ENCODE measurements at regions of chr12 and their contacts with region 1.

Region 1: DNA sequence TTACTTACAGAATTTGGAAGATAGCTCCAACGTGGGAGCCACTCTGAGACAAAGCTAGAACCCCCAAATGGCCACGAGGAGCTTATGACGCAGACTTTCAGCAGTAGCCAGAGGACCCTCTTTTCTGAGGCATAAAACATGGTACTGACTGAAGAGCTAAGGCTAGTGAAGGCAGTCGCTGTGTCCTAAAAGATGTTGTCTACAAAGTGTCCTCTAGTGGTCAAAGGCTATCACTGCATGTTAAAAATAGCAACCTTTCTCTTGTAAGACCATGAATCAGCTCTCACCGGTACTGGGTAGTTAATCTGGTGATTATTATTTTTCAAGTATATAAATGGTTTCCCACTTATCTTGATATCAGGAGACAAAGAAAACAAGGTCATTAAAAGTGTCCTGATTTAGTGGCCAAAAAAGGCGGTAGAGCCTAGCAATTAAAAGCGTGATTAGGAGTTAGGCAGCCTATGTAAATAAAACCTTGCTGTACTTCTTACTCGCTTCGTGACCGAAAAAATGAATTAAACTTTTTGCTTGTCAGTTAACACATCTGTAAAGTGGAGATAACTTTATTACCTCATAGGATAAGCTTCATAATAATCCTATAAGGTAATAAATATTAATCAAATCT is 47.0 kb upstream of the LGR5 start:
- DNase-seq: peak; percentile 64
- H3K4me3 ChIP-seq: no peak overlapping the region
- H3K27ac ChIP-seq: no peak overlapping the region
- H3K4me1 ChIP-seq: no peaks in the 10 kb centered on the region
- H3K27me3 ChIP-seq: no peaks in the 10 kb centered on the region
- CTCF ChIP-seq: peak; percentile 91 to 97

Region 2: DNA sequence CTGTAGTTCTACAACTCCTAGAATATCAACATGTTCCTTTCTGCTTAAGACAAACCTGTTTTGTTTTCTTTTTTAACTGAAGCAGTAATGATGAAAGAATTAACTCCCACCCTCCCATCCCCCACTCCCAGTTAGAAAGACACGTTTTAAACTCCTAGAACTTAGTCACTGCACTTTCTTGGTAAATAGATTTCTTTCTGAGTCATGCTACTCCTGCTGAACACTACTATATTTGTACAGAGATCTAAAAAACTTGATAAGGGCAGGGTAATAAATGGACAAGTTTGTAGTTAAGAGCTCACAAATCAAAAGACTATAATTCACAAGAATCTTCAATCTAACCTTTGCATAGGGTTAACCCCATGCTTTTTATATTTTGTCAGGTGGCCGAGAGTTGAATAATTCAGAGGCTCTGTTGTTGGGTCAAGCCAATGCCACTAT is 636.5 kb before region 1 on chr12:
- CTCF ChIA-PET with region 1: no interaction called
- dilution Hi-C with region 1: no loop called
- in situ Hi-C with region 1: no loop called
- intact Hi-C with region 1: no loop called
- DNase-seq: peak; percentile 73
- H3K4me3 ChIP-seq: no peak overlapping the region
- H3K27ac ChIP-seq: no peak overlapping the region
- H3K4me1 ChIP-seq: no peaks in the 10 kb centered on the region
- H3K27me3 ChIP-seq: peaks cover 3% of the 10 kb centered on the region
- CTCF ChIP-seq: no peak

Region 3: DNA sequence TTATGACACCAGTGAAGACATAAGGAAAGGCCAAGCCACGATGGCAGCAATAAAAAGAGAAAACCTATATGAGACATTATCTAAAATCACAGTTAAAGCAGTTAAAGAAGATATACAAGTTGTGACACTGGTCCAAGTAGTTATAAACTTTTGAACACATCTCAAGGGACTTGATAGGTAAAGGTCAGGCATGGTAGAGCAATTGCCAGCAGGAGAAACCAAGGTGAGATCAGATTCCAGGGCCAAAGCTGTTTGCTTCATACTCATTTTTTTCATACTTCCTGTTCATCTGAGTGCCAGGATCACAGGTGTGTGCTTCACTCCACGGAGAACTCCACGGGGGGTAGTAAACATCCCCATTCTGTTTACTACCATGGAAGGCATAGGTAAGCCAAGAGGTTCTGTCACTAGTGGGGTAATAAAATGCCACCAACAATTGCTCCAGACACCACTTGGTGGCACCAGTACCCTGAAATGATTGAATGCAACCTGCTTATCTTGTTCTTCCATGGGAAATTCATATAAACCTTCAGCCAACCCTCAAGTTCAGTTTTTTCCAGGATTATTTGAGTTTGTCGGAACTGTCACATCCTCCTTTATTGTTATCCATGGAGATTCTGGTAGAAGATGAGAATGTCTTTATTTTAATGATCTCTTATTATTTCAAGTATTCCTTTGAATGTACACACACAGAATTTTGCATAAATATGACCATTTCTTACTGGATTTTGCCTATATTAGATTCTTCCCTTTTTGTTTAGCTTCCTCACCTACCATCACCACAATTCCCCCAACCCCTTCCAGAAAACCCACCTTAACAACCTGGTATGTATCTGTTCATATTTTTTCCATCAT is 175.7 kb before region 1 on chr12:
- CTCF ChIA-PET with region 1: interaction called, 3 read pairs
- dilution Hi-C with region 1: no loop called
- in situ Hi-C with region 1: no loop called
- intact Hi-C with region 1: loop called (anchors 1 kb)
- DNase-seq: peak; percentile 42
- H3K4me3 ChIP-seq: no peak overlapping the region
- H3K27ac ChIP-seq: no peak overlapping the region
- H3K4me1 ChIP-seq: no peaks in the 10 kb centered on the region
- H3K27me3 ChIP-seq: no peaks in the 10 kb centered on the region
- CTCF ChIP-seq: peak; percentile 40 to 61

Region 4: DNA sequence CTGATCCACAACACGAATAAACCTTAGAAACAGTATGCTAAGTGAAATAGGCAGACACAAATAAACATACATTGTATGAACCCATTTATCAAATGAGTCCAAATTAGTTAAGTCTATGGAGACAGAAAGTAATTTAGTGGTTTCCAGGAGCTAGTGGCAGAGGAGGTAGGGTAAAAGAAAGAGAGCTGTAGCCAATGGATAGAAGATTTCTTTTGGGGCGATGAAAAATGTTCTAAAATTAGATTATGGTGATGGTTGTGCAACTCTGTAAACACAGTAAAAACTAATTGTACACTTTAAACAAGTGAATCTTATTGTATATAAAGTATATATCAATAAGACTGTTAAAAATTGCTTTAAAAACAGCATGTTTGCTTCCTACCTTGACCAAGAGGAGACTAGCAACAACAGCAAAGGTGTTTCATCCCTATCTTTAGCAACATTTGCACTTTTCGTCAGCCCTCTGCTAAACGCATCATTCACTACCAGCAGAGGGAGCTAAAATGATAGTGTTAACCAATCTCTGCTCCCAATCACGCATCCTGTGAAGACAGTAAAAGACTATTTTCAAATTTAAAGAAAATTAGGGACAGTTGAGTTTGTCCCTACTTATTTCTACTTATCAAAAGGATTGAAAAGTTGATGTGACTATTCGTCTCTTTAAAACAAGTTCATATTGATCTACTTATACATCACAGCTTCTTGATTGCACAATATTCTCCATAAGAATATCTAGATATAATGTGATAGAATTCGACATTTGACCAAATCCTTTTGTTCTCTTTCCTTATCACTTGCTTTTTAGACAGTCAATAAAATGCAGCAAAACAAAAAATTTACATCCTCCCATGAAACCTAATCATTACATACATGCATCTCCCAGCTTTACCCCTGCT is 23.0 kb after region 1 on chr12:
- CTCF ChIA-PET with region 1: no interaction called
- dilution Hi-C with region 1: no loop called
- in situ Hi-C with region 1: no loop called
- intact Hi-C with region 1: no loop called
- DNase-seq: peak; percentile 34
- H3K4me3 ChIP-seq: no peak overlapping the region
- H3K27ac ChIP-seq: no peak overlapping the region
- H3K4me1 ChIP-seq: no peaks in the 10 kb centered on the region
- H3K27me3 ChIP-seq: no peaks in the 10 kb centered on the region
- CTCF ChIP-seq: peak; percentile 81

Measured in mammary epithelial cell (primary cell).